MCF 10A (cell line): ENCODE measurements at regions of chr1 and their contacts with region 1.

Region 1: GRCh38 chr1:156456622-156457465 is 43.7 kb downstream of the MEF2D start:
- DNase-seq: peak; percentile 100
- H3K4me3 Mint-ChIP-seq: peak overlapping the region; percentile 90
- H3K27ac Mint-ChIP-seq: peak overlapping the region; percentile 99
- H3K4me1 Mint-ChIP-seq: peaks cover 42% of the 10 kb centered on the region
- H3K27me3 Mint-ChIP-seq: no peaks in the 10 kb centered on the region
- CTCF ChIP-seq: no peak

Region 2: GRCh38 chr1:156416993-156417392 is 39.9 kb before region 1 on chr1:
- CTCF ChIA-PET with region 1: no interaction called
- POLR2A ChIA-PET with region 1: no interaction called
- intact Hi-C with region 1: no loop called
- DNase-seq: no peak
- H3K4me3 Mint-ChIP-seq: no peak overlapping the region
- H3K27ac Mint-ChIP-seq: no peak overlapping the region
- H3K4me1 Mint-ChIP-seq: peaks cover 4% of the 10 kb centered on the region
- H3K27me3 Mint-ChIP-seq: peaks cover 82% of the 10 kb centered on the region
- CTCF ChIP-seq: no peak

Region 3: GRCh38 chr1:156433602-156434001 is 23.2 kb before region 1 on chr1:
- CTCF ChIA-PET with region 1: no interaction called
- POLR2A ChIA-PET with region 1: no interaction called
- intact Hi-C with region 1: no loop called
- DNase-seq: no peak
- H3K4me3 Mint-ChIP-seq: no peak overlapping the region
- H3K27ac Mint-ChIP-seq: no peak overlapping the region
- H3K4me1 Mint-ChIP-seq: no peaks in the 10 kb centered on the region
- H3K27me3 Mint-ChIP-seq: peaks cover 99% of the 10 kb centered on the region
- CTCF ChIP-seq: no peak

Region 4: DNA sequence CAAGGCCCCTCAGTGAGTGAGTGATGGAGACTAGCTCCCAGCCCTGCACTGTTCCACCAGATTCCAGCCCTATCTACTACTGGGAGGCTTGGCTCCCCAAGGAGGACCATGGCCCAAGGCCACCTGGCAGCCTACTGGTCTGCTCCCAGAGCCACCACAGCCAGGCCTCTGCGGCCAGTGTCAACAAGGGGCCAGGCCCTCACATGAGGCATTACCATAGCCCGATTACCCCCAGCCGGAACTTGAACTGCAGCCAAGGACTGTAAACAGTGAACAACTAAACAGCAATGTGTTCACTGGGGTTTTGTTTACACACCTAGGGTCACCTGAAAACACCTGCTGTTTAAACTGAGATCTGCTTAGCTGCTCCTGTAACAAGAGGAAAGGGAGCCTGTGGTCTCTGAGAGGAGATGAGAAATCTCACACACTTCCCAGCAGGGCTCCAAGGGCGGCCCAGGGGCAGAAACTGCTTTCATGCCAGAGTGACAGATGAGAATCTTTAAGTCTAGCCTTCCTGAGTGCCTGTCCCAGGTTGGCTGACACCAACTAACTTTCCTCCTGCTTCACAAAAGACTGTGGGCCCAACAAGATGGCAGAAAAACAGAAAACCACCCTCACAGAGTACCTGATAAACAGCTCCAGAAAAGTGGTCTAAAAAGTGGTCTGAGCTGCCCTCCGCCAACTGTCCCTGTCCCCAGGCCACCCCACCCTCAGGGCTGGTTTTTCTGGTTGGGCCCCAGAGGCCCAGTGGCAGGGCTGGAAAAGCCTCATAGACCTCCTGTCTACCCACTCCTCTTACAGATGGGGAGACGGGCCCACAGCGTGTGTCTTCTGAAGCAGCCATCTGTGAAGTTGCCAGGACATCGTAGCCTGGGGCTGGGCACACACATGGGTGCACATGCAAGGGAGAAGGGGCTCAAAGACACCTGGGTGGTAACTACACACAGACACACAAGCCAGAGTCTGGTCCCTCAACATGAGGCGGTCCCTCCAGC is 14.9 kb after region 1 on chr1:
- CTCF ChIA-PET with region 1: interaction called, 5 read pairs
- POLR2A ChIA-PET with region 1: interaction called, 25 read pairs
- intact Hi-C with region 1: no loop called
- DNase-seq: no peak
- H3K4me3 Mint-ChIP-seq: no peak overlapping the region
- H3K27ac Mint-ChIP-seq: no peak overlapping the region
- H3K4me1 Mint-ChIP-seq: peaks cover 8% of the 10 kb centered on the region
- H3K27me3 Mint-ChIP-seq: no peaks in the 10 kb centered on the region
- CTCF ChIP-seq: no peak

Region 5: DNA sequence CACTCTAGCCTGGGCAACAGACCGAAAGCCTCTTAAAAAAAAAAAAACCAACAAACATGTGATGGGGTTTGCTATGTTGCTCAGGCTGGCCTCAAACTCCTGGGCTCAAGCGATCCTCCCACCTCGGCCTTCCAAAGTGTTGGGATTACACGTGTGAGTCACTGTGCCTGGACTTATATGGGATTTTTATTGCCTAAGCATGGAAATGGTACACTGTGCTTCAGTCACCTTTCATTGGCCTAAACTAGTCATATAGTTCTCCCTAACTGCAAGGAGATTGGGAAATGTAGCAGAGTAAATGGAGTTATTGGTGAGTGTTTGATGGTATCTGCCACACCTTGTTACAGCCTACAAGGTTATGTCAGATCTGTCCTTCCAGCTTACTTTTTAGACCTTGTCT is 60.9 kb after region 1 on chr1:
- CTCF ChIA-PET with region 1: interaction called, 8 read pairs
- POLR2A ChIA-PET with region 1: interaction called, 33 read pairs
- intact Hi-C with region 1: no loop called
- DNase-seq: peak; percentile 93
- H3K4me3 Mint-ChIP-seq: no peak overlapping the region
- H3K27ac Mint-ChIP-seq: peak overlapping the region; percentile 91
- H3K4me1 Mint-ChIP-seq: peaks cover 14% of the 10 kb centered on the region
- H3K27me3 Mint-ChIP-seq: no peaks in the 10 kb centered on the region
- CTCF ChIP-seq: no peak

Region 6: DNA sequence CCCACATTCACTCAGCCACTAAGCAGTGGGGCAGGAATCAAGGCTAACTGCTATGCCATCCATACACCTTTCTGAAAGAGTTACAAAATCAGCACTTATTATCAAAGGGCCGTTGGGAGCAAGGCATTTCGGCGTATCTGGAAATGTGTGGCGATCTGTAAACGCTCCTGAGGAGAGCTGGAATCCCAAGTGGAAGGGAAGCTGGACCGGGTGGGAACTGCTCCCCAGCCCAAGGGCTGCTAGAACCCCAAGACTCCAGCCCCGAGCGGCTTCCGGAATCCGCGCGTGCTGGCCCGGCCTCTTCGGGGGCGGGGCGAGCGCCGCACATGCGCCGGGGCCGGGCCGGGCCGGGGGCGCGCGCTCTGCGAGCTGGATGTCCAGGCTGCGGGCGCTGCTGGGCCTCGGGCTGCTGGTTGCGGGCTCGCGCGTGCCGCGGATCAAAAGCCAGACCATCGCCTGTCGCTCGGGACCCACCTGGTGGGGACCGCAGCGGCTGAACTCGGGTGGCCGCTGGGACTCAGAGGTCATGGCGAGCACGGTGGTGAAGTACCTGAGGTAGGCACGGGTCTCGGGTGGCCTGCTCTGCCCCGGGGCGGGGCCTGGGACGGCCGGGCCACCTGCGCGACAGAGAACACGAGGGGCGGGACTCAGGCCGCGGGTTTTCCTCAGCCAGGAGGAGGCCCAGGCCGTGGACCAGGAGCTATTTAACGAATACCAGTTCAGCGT is 134.8 kb after region 1 on chr1 and contains the start of gene NAXE:
- CTCF ChIA-PET with region 1: interaction called, 13 read pairs
- POLR2A ChIA-PET with region 1: interaction called, 29 read pairs
- intact Hi-C with region 1: no loop called
- DNase-seq: peak; percentile 77
- H3K4me3 Mint-ChIP-seq: peak within 1 kb of the TSS; percentile 77
- H3K27ac Mint-ChIP-seq: peak within 1 kb of the TSS; percentile 65
- H3K4me1 Mint-ChIP-seq: peaks cover 13% of the 10 kb centered on the region
- H3K27me3 Mint-ChIP-seq: no peaks in the 10 kb centered on the region
- CTCF ChIP-seq: no peak
- total RNA-seq, gene NAXE: 141 and 155 TPM in 2 replicates

Region 7: DNA sequence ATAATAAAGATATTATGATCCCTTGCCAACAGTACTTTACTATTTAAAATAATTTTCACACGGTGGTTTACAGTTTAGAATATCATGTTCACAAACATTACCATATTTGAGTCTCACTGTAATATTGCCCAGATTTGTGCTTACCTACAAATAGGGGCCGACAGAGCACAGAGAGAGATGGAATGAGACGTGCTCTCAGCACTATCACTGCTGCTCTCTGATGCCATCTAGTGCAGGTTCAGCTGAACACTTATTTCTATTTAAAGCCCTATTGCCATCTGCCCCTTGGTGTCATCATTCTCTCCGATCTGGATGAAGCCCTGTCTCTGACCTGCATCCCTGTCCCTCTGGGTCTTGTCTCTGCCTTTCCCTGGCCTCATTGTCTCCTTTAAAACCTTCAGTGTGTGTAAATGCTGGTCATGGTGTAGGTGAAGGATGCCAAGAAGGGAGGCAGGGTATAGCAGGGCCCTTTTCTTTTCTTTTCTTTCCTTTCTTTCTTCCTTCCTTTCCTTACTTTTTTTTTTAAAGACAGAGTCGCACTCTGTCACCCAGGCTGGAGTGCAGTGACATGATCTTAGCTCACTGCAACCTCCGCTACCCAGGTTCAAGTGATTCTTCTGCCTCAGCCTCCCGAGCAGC is 151.3 kb after region 1 on chr1:
- CTCF ChIA-PET with region 1: interaction called, 19 read pairs
- POLR2A ChIA-PET with region 1: interaction called, 8 read pairs
- intact Hi-C with region 1: loop called (anchors 1 kb)
- DNase-seq: peak; percentile 87
- H3K4me3 Mint-ChIP-seq: no peak overlapping the region
- H3K27ac Mint-ChIP-seq: no peak overlapping the region
- H3K4me1 Mint-ChIP-seq: no peaks in the 10 kb centered on the region
- H3K27me3 Mint-ChIP-seq: peaks cover 24% of the 10 kb centered on the region
- CTCF ChIP-seq: peak; percentile 89